ENCODE measurements at regions of chr2 and their contacts with region 1.

Region 1: DNA sequence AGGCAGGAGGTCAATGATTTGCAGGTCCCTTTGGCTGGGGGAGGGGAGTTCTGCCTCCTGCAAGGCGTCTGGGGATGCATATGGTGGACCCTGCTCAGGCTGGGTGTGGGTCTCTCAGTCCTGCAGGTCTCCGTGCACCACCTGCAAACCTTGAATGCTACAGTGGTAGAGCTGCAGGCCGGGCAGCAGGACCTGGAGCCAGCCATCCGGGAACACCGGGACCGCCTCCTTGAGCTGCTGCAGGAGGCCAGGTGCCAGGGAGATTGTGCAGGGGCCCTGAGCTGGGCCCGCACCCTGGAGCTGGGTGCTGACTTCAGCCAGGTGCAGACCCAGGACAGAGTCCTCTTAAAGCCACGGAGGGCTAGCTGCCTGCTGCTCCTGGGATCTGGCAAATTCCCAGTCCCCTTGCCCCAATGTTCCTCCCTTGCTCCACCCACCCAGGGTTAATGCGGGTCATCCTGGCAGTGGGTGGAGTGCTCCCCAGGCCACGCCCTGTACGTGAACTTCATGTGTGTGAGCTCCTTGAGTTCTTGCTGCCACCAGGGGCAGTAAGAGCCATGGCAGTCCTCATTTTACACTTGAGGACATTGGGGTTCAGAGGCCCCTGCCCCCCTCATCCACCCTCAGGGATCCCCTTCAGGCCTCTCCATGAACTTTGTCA is 3.1 kb downstream of the PROM2 start:
- DNase-seq: peak; percentile 90
- H3K4me3 Mint-ChIP-seq: peak overlapping the region; percentile 55
- H3K27ac Mint-ChIP-seq: peak overlapping the region; percentile 63
- H3K4me1 Mint-ChIP-seq: peaks cover 31% of the 10 kb centered on the region
- H3K27me3 Mint-ChIP-seq: no peaks in the 10 kb centered on the region
- CTCF ChIP-seq: no peak

Region 2: DNA sequence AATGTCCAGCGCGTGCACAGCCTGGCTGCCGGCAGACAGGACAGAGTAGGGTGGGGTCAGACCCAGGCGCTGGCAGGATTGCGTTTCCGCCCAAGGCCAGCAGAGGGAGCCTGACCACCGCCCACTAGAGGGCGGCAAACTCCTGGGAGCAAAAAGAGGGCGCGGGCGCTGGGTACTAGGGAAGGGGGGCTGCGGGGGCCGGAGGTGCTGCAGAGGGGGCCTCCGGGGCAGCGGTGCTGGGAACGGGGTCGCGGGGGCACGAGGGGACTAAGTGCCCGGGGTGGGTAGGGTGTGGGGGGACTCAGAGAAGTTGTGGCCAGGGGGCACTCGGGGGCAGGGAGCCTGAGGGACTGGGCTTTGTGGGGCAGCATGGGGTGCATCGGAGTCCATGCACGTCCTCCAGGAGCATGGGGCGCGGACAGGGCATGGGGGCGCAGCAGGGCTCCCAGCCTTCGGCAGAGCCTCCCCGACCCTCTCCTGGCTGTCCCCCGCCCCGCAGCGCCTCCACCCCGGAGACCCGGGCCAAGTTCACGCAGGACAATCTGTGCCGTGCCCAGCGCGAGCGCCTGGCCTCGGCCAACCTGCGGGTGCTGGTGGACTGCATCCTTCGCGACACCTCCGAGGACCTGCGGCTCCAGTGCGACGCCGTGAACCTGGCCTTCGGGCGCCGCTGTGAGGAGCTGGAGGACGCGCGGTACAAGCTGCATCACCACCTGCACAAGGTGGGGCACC is 402.9 kb before region 1 on chr2:
- CTCF ChIA-PET with region 1: no interaction called
- POLR2A ChIA-PET with region 1: no interaction called
- intact Hi-C with region 1: no loop called
- DNase-seq: peak; percentile 50
- H3K4me3 Mint-ChIP-seq: no peak overlapping the region
- H3K27ac Mint-ChIP-seq: no peak overlapping the region
- H3K4me1 Mint-ChIP-seq: no peaks in the 10 kb centered on the region
- H3K27me3 Mint-ChIP-seq: peaks cover 11% of the 10 kb centered on the region
- CTCF ChIP-seq: peak; percentile 97

Region 3: DNA sequence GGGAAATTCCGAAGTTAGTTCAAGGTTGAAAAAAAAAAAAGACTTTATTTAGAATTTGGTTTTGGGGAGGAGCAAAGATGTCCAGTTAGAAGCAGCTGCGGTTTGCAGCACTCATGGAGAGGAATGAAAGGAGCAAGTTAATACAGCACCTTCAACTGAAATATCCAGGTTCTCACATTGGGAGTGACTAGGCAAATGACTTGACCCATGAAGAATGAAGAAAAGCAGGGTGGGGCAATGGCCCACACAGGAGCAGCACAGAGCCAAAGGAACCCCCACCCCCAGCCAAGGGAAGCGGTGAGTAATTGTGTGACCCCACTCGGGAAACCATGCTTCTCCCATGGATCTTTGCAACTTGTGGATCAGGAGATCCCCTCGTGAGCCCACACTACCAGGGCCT is 37.3 kb before region 1 on chr2:
- CTCF ChIA-PET with region 1: interaction called, 13 read pairs
- POLR2A ChIA-PET with region 1: interaction called, 5 read pairs
- intact Hi-C with region 1: no loop called
- DNase-seq: peak; percentile 23
- H3K4me3 Mint-ChIP-seq: peak overlapping the region; percentile 12
- H3K27ac Mint-ChIP-seq: peak overlapping the region; percentile 86
- H3K4me1 Mint-ChIP-seq: peaks cover 7% of the 10 kb centered on the region
- H3K27me3 Mint-ChIP-seq: no peaks in the 10 kb centered on the region
- CTCF ChIP-seq: no peak

Region 4: GRCh38 chr2:95259765-95260417 is 17.5 kb before region 1 on chr2:
- CTCF ChIA-PET with region 1: interaction called, 15 read pairs
- POLR2A ChIA-PET with region 1: interaction called, 20 read pairs
- intact Hi-C with region 1: no loop called
- DNase-seq: peak; percentile 82
- H3K4me3 Mint-ChIP-seq: peak overlapping the region; percentile 9
- H3K27ac Mint-ChIP-seq: peak overlapping the region; percentile 71
- H3K4me1 Mint-ChIP-seq: peaks cover 27% of the 10 kb centered on the region
- H3K27me3 Mint-ChIP-seq: no peaks in the 10 kb centered on the region
- CTCF ChIP-seq: no peak

Region 5: DNA sequence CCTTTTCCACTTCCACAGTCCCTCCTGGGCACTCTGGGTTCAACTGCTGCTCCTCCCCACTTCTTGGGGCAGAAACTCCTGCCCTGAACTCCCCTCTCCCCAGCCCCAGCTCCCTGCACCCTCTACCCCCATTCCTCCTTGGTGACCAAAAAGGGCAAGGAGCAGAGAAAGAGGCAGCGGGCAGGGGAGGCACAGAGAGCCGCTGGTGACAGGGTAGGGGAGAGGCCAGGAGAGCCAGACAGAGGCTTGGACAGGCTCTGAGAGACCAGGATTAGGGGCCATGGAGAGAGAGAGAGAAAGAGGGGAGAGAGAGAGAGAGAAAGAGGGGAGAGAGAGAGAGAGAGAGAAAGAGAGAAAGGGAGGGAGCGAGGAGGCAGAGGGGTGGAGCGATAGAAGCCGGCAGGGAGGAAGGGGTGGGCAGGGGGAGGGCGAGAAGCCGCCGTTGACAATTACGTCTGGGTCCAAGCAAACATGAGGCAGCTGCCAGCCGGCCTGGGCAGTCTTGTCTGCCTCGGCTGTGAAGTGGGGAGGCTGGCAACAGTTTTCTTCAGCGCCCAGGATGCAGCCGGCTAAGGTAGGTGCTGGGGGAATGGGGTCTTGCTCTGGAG is 19.6 kb after region 1 on chr2 and contains the start of gene KCNIP3:
- CTCF ChIA-PET with region 1: interaction called, 11 read pairs
- POLR2A ChIA-PET with region 1: interaction called, 11 read pairs
- intact Hi-C with region 1: no loop called
- DNase-seq: no peak
- H3K4me3 Mint-ChIP-seq: no peak within 1 kb of the TSS
- H3K27ac Mint-ChIP-seq: no peak within 1 kb of the TSS
- H3K4me1 Mint-ChIP-seq: peaks cover 15% of the 10 kb centered on the region
- H3K27me3 Mint-ChIP-seq: peaks cover 12% of the 10 kb centered on the region
- CTCF ChIP-seq: no peak
- total RNA-seq, gene KCNIP3: 9.5 and 15.6 TPM in 2 replicates

Region 6: GRCh38 chr2:95314964-95315611 is 37.7 kb after region 1 on chr2:
- CTCF ChIA-PET with region 1: interaction called, 27 read pairs
- POLR2A ChIA-PET with region 1: interaction called, 18 read pairs
- intact Hi-C with region 1: loop called (anchors 1 kb)
- DNase-seq: peak; percentile 80
- H3K4me3 Mint-ChIP-seq: peak overlapping the region; percentile 36
- H3K27ac Mint-ChIP-seq: peak overlapping the region; percentile 86
- H3K4me1 Mint-ChIP-seq: peaks cover 52% of the 10 kb centered on the region
- H3K27me3 Mint-ChIP-seq: no peaks in the 10 kb centered on the region
- CTCF ChIP-seq: peak; percentile 83